ENCODE measurements at regions of chr12 and their contacts with region 1.

Region 1: GRCh38 chr12:19439059-19440018 is at the start of gene AEBP2:
- H3K4me3 Mint-ChIP-seq: peak within 1 kb of the TSS; percentile 99
- H3K27ac Mint-ChIP-seq: peak within 1 kb of the TSS; percentile 98
- H3K4me1 Mint-ChIP-seq: peaks cover 1% of the 10 kb centered on the region
- H3K27me3 Mint-ChIP-seq: peaks cover 3% of the 10 kb centered on the region

Region 2: DNA sequence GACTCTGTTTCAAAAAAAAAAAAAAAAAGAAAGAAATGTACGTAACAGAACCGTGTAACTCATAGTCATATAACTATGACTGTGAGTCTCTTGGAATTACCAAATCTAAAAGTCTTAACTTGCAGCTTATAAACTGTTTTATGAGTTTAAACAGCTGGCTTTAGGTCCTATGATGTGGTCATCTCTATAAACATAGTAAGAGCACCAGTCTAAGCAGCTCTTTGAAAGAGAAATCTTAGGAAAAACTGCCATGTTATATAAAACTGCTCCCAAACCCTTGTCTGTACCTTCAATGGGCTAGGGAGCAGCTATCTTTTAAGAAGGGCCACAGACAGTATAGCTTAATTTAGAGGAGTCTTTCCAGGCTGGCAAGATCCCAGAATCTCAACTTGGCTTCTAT is 115.5 kb before region 1 on chr12:
- intact Hi-C with region 1: no loop called
- H3K4me3 Mint-ChIP-seq: no peak overlapping the region
- H3K27ac Mint-ChIP-seq: no peak overlapping the region
- H3K4me1 Mint-ChIP-seq: no peaks in the 10 kb centered on the region
- H3K27me3 Mint-ChIP-seq: no peaks in the 10 kb centered on the region

Region 3: DNA sequence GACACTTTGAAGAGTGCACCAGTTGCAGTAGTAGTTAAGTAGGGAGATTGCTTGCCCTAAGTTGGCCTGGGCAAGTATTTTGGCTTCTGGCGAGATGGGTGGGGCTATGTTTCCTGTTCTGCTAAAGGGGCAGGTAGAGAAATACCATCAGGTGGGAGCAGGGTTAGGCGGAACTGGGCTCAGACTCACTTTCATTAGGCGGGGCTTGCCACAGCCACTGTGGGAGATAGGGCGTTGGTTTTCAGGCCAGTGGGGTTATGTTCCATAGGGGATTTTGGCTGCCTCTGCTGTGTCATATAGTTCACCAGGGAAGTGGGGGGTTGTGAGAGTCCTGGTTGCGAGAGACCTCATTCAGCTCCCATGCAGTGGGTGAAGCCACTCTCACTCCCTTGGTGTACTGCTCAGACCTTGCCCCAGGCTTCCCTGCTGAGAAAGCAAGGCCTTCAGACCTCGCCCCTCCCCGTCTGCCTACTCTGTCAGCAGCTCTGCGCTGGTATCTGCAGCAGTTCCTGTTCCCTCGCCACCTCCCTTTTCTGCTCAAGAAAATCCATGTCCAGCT is 43.3 kb after region 1 on chr12:
- intact Hi-C with region 1: loop called (anchors 2 kb)
- H3K4me3 Mint-ChIP-seq: peak overlapping the region; percentile 33
- H3K27ac Mint-ChIP-seq: peak overlapping the region; percentile 82
- H3K4me1 Mint-ChIP-seq: peaks cover 50% of the 10 kb centered on the region
- H3K27me3 Mint-ChIP-seq: no peaks in the 10 kb centered on the region

Region 4: DNA sequence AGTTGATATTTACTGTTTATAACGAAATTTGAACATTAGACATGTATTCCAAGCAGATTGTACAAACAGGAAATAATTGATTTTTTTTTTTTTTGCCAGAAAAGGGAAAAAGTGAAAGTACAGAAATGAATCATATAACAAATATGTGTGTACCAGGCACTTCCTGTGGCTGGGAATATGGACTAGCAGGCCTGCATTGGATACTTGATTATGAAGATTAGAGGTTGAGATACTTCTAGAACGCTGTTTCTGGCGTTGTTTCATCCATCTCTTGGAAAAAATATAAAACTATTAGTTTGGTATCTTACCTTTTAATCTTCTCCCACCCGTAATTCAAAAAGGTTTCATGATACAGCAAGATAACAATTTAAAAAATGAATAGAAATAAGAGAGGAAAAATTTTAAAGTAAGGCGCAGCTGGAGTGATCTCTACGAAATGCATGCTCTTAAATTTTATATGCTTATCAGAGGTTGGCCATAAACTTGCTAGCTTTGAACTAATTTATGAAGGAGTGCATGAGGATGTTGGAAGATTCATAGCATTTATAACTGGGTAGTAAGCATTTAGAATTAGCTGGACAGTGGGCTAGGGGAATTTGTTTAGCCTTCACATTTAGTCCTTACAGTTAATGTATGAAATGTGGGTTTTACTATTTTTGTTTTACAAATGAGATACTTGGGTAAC is 90.8 kb after region 1 on chr12:
- intact Hi-C with region 1: no loop called
- H3K4me3 Mint-ChIP-seq: no peak overlapping the region
- H3K27ac Mint-ChIP-seq: no peak overlapping the region
- H3K4me1 Mint-ChIP-seq: peaks cover 5% of the 10 kb centered on the region
- H3K27me3 Mint-ChIP-seq: no peaks in the 10 kb centered on the region